Prostate gland (tissue), 2 donors: ENCODE measurements at regions of chr2 and their contacts with region 1.

Region 1: GRCh38 chr2:120174963-120175581 is 48.1 kb downstream of the TMEM185B start:
- DNase-seq: peak; percentile 54
- H3K4me3 ChIP-seq: no peak overlapping the region
- H3K27ac ChIP-seq: no peak overlapping the region
- H3K4me1 ChIP-seq: no peaks in the 10 kb centered on the region
- H3K27me3 ChIP-seq: no peaks in the 10 kb centered on the region
- CTCF ChIP-seq: peak; percentile 50 to 77 (median 74)
- POLR2A ChIP-seq: no peak

Region 2: GRCh38 chr2:119702918-119703401 is 472.1 kb before region 1 on chr2:
- intact Hi-C with region 1: loop called (anchors 2 kb)
- DNase-seq: peak; percentile 43
- H3K4me3 ChIP-seq: no peak overlapping the region
- H3K27ac ChIP-seq: no peak overlapping the region
- H3K4me1 ChIP-seq: no peaks in the 10 kb centered on the region
- H3K27me3 ChIP-seq: peaks cover 2% of the 10 kb centered on the region
- CTCF ChIP-seq: peak; percentile 63 to 92 (median 86)
- POLR2A ChIP-seq: no peak

Region 3: DNA sequence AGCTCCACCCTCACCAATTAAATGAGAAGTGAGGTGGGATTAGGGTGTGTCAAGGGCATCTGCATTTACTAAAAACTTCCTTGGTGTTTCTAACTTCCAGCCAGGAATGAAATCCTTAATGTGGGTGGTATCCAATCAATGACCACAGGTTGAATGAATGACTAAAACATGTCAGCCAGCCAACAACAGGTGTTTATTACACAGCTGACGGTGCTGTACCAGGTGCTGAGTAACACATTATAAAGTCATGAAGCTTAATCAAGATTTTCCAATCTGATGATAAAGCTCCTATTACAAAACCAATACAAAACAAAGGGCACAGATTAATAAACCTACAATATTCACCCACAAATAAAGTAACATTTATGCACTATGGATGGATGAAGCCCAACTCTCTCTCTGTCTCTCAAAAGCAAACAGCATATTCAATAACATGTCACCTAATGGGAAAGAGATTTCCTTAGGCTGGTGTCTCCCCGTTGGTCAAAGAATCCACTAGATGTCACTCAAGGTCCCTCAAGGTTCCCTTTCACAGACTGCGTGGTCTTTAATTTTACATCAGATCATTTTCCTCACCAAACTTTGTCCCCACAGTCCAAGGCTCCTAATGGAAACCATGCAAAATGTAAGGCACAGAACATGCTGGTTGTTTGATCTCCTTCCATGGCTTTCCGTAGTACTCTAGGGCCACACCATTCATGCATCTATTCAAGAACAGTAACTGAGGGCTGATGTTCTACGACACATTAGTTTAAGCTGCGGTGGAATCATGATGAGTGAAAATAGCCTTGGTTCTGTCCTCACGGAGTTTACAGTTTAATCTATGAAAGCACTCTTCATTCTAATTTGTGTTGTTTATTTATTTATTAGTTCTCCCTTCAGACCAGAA is 421.8 kb before region 1 on chr2:
- intact Hi-C with region 1: loop called (anchors 2 kb)
- DNase-seq: peak; percentile 22
- H3K4me3 ChIP-seq: no peak overlapping the region
- H3K27ac ChIP-seq: no peak overlapping the region
- H3K4me1 ChIP-seq: no peaks in the 10 kb centered on the region
- H3K27me3 ChIP-seq: no peaks in the 10 kb centered on the region
- CTCF ChIP-seq: peak; percentile 31 to 58 (median 42)
- POLR2A ChIP-seq: no peak

Region 4: GRCh38 chr2:120012771-120013596 is 162.1 kb before region 1 on chr2 and contains the start of gene EPB41L5:
- intact Hi-C with region 1: no loop called
- DNase-seq: peak; percentile 90
- H3K4me3 ChIP-seq: peak within 1 kb of the TSS; percentile 95 to 100
- H3K27ac ChIP-seq: peak within 1 kb of the TSS; percentile 91
- H3K4me1 ChIP-seq: no peaks in the 10 kb centered on the region
- H3K27me3 ChIP-seq: no peaks in the 10 kb centered on the region
- CTCF ChIP-seq: no peak
- POLR2A ChIP-seq: peak; percentile 61
- total RNA-seq, gene EPB41L5: 37.1 to 51.1 TPM

Region 5: DNA sequence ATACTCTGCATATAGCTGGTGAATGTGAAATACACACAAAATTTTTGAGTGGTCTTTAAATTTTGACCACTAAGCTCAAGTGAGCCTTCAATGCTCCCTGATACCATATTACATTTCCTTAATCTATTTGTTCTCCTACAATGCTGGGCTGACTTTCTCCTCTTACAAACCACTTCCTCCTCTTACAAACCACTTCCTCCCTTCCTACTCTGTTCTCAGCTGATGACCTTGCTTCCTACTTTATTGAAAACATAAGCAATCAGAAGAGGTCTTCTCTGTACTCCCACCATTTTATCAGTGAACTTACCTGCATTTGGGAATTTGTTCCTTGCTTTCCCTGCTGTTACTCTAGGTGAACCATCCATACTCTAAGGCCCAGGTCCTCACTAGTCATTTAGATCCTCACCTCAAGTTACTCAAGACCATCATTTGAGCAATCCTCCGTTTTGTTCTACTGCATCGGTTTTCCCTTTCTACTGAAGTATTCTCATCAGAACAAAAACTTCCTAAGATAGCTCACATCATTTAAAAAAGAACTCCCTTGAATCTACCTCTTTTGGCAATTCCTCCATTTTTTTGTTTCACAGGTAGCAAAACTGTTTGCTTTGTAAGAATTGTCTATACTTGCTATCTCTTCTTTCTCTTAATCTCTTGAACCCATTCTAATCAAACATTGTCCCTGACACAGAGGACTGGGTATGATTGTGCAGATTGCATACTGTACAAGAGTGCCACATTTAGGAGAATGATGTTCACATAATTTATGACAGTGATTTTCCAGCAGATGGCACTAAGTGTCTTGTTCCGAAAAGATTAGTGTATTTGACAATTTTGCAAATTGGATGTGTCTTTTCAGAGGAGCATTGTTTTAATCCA is 65.6 kb before region 1 on chr2:
- intact Hi-C with region 1: loop called (anchors 2 kb)
- DNase-seq: no peak
- H3K4me3 ChIP-seq: no peak overlapping the region
- H3K27ac ChIP-seq: no peak overlapping the region
- H3K4me1 ChIP-seq: no peaks in the 10 kb centered on the region
- H3K27me3 ChIP-seq: no peaks in the 10 kb centered on the region
- CTCF ChIP-seq: peak in 2 of 4 experiments; percentile 40 to 60
- POLR2A ChIP-seq: no peak